T-cell (primary cell): ENCODE measurements at regions of chr6 and their contacts with region 1.

Region 1: GRCh38 chr6:142474531-142475289 is 172.9 kb downstream of the ADGRG6 start:
- DNase-seq: peak in 2 of 35 experiments; percentile 15 to 72
- ATAC-seq: no peak
- H3K4me3 ChIP-seq: no peak overlapping the region
- H3K4me3 Mint-ChIP-seq: no peak overlapping the region
- H3K27ac ChIP-seq: no peak overlapping the region
- H3K27ac Mint-ChIP-seq: no peak overlapping the region
- H3K4me1 ChIP-seq: no peaks in the 10 kb centered on the region
- H3K4me1 Mint-ChIP-seq: peaks cover 5 to 8% (median 8%) of the 10 kb centered on the region in 3 donors
- H3K27me3 ChIP-seq: peaks cover 0 to 2% of the 10 kb centered on the region in 2 experiments
- H3K27me3 Mint-ChIP-seq: peaks cover 0 to 5% of the 10 kb centered on the region in 2 donors

Region 2: DNA sequence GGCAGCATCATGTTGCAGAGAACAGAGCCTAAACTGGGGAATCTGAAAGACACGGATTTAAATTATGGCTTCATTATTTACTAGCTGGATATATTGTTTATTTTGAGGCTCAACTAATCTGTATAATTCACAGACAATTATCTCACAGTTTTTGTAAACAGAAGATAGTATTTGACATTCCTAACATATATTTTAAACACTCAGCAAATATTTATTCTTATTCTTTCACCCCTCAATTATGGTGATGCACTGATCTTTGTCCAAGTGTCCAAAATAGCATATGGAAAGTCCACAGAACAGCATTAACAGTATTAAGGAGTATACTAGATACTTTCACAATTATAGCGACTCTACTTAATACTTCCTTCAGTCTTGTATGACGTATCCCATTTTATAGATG is 84.1 kb after region 1 on chr6:
- CTCF ChIA-PET with region 1: no interaction called
- POLR2A ChIA-PET with region 1: no interaction called
- DNase-seq: no peak
- ATAC-seq: no peak
- H3K4me3 ChIP-seq: no peak overlapping the region
- H3K4me3 Mint-ChIP-seq: no peak overlapping the region
- H3K27ac ChIP-seq: no peak overlapping the region
- H3K27ac Mint-ChIP-seq: no peak overlapping the region
- H3K4me1 ChIP-seq: peaks cover 15 to 23% of the 10 kb centered on the region in 2 experiments
- H3K4me1 Mint-ChIP-seq: peaks cover 22 to 26% (median 24%) of the 10 kb centered on the region in 3 donors
- H3K27me3 ChIP-seq: no peaks in the 10 kb centered on the region
- H3K27me3 Mint-ChIP-seq: no peaks in the 10 kb centered on the region

Region 3: DNA sequence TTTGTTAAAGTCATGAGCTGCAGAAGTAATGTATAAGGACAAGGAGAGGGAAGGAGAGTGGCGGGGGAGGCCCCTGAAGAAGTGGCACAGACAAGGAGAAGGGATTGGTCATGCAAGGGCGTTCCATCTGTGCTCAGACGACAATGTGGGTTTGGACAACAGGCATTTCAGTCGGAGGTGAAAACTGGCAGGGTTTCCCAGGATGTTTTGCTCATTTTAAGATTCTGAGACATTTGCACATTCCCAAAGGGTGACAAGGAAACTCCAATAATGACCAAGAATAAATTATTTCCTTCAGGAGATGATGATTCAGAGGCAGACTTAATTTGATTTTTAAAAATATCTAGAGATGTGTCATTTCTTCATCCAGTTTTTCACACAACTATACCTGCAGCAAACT is 288.5 kb after region 1 on chr6:
- CTCF ChIA-PET with region 1: interaction called in 1 of 2 experiments, 12 read pairs
- POLR2A ChIA-PET with region 1: no interaction called
- DNase-seq: no peak
- ATAC-seq: no peak
- H3K4me3 ChIP-seq: no peak overlapping the region
- H3K4me3 Mint-ChIP-seq: no peak overlapping the region
- H3K27ac ChIP-seq: no peak overlapping the region
- H3K27ac Mint-ChIP-seq: peak overlapping the region; percentile 74 to 75
- H3K4me1 ChIP-seq: no peaks in the 10 kb centered on the region
- H3K4me1 Mint-ChIP-seq: peaks cover 36 to 57% (median 56%) of the 10 kb centered on the region in 3 donors
- H3K27me3 ChIP-seq: no peaks in the 10 kb centered on the region
- H3K27me3 Mint-ChIP-seq: no peaks in the 10 kb centered on the region